Activated CD4-positive, alpha-beta memory T cell treated with anti-CD3 and anti-CD28 coated beads for 36 hours (primary cell): ENCODE measurements at regions of chr9 and their contacts with region 1.

Region 1: DNA sequence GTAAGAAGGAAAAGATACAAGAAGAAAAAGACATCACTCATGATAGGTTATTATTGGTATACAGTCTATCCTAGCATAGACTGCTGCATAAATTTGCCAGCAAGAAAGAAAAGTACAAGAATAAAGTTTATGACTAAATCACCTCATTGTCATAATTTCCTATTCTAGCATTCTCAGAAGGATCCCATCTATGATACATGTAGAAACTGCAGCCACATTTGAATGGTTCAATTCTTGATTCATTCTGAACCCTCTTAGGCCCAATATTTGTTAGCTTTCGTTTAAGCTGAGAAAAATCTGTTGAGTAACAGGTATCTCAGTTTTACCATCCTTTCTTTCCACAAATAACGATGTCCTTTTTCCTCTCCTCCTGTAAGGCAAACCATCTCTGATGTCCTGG is 21.2 kb downstream of the INVS start:
- DNase-seq: no peak
- H3K4me3 Mint-ChIP-seq: no peak overlapping the region
- H3K27ac Mint-ChIP-seq: no peak overlapping the region
- H3K4me1 Mint-ChIP-seq: peaks cover 12% of the 10 kb centered on the region
- H3K27me3 Mint-ChIP-seq: no peaks in the 10 kb centered on the region

Region 2: GRCh38 chr9:100106616-100107015 is 13.7 kb before region 1 on chr9:
- CTCF ChIA-PET with region 1: no interaction called
- POLR2A ChIA-PET with region 1: no interaction called
- intact Hi-C with region 1: loop called (anchors 2 kb)
- DNase-seq: no peak
- H3K4me3 Mint-ChIP-seq: no peak overlapping the region
- H3K27ac Mint-ChIP-seq: no peak overlapping the region
- H3K4me1 Mint-ChIP-seq: peaks cover 9% of the 10 kb centered on the region
- H3K27me3 Mint-ChIP-seq: no peaks in the 10 kb centered on the region

Region 3: DNA sequence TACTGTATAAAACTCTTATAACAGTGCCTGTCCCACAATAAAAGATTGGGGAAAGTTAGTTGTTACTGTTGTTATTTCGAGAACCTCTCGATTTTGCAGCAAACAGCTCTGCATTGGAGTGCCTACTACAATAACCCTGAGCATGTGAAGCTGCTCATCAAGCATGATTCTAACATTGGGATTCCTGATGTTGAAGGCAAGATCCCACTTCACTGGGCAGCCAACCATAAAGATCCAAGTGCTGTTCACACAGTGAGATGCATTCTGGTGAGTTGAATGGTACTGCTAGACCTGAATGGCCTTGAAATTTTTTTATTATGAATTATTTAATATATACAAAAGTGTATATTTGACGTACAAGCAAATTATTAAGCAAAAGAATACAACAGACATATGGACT is 109.3 kb after region 1 on chr9:
- CTCF ChIA-PET with region 1: no interaction called
- POLR2A ChIA-PET with region 1: no interaction called
- intact Hi-C with region 1: no loop called
- DNase-seq: no peak
- H3K4me3 Mint-ChIP-seq: no peak overlapping the region
- H3K27ac Mint-ChIP-seq: no peak overlapping the region
- H3K4me1 Mint-ChIP-seq: no peaks in the 10 kb centered on the region
- H3K27me3 Mint-ChIP-seq: no peaks in the 10 kb centered on the region

Region 4: GRCh38 chr9:100269656-100270055 is 149.4 kb after region 1 on chr9:
- CTCF ChIA-PET with region 1: no interaction called
- POLR2A ChIA-PET with region 1: no interaction called
- intact Hi-C with region 1: no loop called
- DNase-seq: no peak
- H3K4me3 Mint-ChIP-seq: no peak overlapping the region
- H3K27ac Mint-ChIP-seq: no peak overlapping the region
- H3K4me1 Mint-ChIP-seq: no peaks in the 10 kb centered on the region
- H3K27me3 Mint-ChIP-seq: no peaks in the 10 kb centered on the region